ENCODE measurements at regions of chr19 and their contacts with region 1.

Region 1: DNA sequence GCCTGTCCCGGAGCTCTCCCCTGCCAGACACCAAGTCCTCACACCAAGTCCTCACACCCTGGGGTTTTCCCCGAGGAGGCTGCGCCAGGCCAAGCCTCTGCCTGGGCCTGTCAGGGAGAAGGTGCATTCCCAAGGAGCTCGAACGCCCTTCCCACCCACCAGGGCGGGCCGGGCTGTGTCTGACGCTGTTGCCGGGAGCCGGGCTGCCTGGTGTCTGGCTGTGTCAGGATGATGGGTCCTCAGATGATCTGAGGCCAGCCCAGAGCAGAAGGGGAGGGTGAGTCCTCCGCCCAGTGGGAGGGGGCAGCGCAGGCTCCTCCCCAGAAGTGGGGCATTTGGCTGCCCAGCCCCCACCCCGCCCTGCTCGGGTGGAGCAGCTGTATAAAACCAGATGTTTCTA is 2.3 kb upstream of the HAS1 start:
- DNase-seq: no peak
- ATAC-seq: peak; percentile 53; the same call in 1 of the 2 replicates
- H3K4me3 ChIP-seq: no peak overlapping the region
- H3K27ac ChIP-seq: no peak overlapping the region
- H3K4me1 ChIP-seq: no peaks in the 10 kb centered on the region
- H3K27me3 ChIP-seq: no peaks in the 10 kb centered on the region
- CTCF ChIP-seq: no peak

Region 2: DNA sequence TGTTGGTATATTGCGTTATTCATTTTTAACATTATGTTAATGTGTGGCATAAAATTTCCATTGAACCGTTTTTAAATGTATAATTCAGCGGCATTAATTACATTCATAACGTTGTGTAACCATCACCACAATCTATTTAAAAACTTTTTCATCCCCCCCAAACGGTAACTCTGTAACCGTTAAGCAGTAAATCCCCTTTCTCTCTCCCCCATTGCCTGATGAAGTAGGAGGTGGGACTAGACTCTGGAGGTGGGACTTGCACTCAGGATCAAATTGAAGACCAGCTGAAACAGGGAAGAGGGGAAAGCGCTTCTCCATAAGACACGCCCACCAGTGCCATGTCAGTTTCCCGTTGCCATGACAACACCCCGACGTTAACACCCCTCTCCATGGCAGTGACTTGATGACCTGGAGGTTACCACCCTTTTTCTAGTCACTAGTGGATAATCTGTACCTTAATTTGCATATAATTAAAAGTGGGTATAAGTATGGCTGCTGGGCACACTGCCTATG is 986.1 kb before region 1 on chr19:
- CTCF ChIA-PET with region 1: no interaction called
- POLR2A ChIA-PET with region 1: no interaction called
- in situ Hi-C with region 1: no loop called
- intact Hi-C with region 1: no loop called
- DNase-seq: no peak
- ATAC-seq: no peak
- H3K4me3 ChIP-seq: no peak overlapping the region
- H3K27ac ChIP-seq: no peak overlapping the region
- H3K4me1 ChIP-seq: no peaks in the 10 kb centered on the region
- H3K27me3 ChIP-seq: peaks cover 2% of the 10 kb centered on the region; the same call in 1 of the 2 replicates
- CTCF ChIP-seq: no peak

Region 3: GRCh38 chr19:51743405-51743804 is 17.4 kb after region 1 on chr19:
- CTCF ChIA-PET with region 1: no interaction called
- POLR2A ChIA-PET with region 1: interaction called, 13 read pairs
- in situ Hi-C with region 1: no loop called
- intact Hi-C with region 1: no loop called
- DNase-seq: no peak
- ATAC-seq: no peak
- H3K4me3 ChIP-seq: no peak overlapping the region
- H3K27ac ChIP-seq: no peak overlapping the region
- H3K4me1 ChIP-seq: no peaks in the 10 kb centered on the region
- H3K27me3 ChIP-seq: no peaks in the 10 kb centered on the region
- CTCF ChIP-seq: no peak

Region 4: GRCh38 chr19:51822325-51822724 is 96.3 kb after region 1 on chr19:
- CTCF ChIA-PET with region 1: interaction called, 13 read pairs
- POLR2A ChIA-PET with region 1: no interaction called
- in situ Hi-C with region 1: no loop called
- intact Hi-C with region 1: no loop called
- DNase-seq: no peak
- ATAC-seq: no peak
- H3K4me3 ChIP-seq: no peak overlapping the region
- H3K27ac ChIP-seq: no peak overlapping the region
- H3K4me1 ChIP-seq: no peaks in the 10 kb centered on the region
- H3K27me3 ChIP-seq: no peaks in the 10 kb centered on the region
- CTCF ChIP-seq: no peak

Region 5: GRCh38 chr19:52039169-52039568 is 313.1 kb after region 1 on chr19:
- CTCF ChIA-PET with region 1: no interaction called
- POLR2A ChIA-PET with region 1: no interaction called
- in situ Hi-C with region 1: no loop called
- intact Hi-C with region 1: no loop called
- DNase-seq: no peak
- ATAC-seq: no peak
- H3K4me3 ChIP-seq: no peak overlapping the region
- H3K27ac ChIP-seq: no peak overlapping the region
- H3K4me1 ChIP-seq: no peaks in the 10 kb centered on the region
- H3K27me3 ChIP-seq: no peaks in the 10 kb centered on the region
- CTCF ChIP-seq: no peak

Measured in Panc1 (cell line).